ENCODE measurements at regions of chr3 and their contacts with region 1.

Region 1: GRCh38 chr3:58452176-58452575 is 18.5 kb upstream of the PDHB start:
- DNase-seq: no peak
- ATAC-seq: no peak
- H3K4me3 Mint-ChIP-seq: no peak overlapping the region
- H3K27ac Mint-ChIP-seq: no peak overlapping the region
- H3K4me1 Mint-ChIP-seq: peaks cover 2% of the 10 kb centered on the region
- H3K27me3 Mint-ChIP-seq: no peaks in the 10 kb centered on the region
- CTCF ChIP-seq: no peak

Region 2: DNA sequence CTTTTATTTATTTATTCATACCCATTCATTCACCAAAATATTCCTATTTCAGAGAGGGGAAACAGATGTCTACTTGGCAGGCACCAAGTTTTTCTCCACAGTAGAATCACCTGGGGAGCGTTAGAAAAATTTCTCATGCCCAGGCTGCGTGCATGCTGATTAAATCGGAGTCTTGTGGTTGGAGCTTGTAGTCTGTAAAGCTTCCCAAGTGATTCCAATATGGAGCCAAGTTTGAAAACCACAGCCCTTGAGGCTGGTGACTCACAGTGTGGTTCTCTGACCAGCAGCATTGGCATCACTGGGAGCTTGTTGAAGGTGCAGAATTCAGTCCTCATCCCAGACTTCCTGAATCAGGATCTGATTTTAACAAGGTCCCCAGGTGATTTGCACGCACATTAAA is 68.3 kb before region 1 on chr3:
- CTCF ChIA-PET with region 1: no interaction called
- POLR2A ChIA-PET with region 1: interaction called, 13 read pairs
- intact Hi-C with region 1: no loop called
- DNase-seq: no peak
- ATAC-seq: no peak
- H3K4me3 Mint-ChIP-seq: no peak overlapping the region
- H3K27ac Mint-ChIP-seq: no peak overlapping the region
- H3K4me1 Mint-ChIP-seq: peaks cover 54% of the 10 kb centered on the region
- H3K27me3 Mint-ChIP-seq: no peaks in the 10 kb centered on the region
- CTCF ChIP-seq: no peak